Dorsolateral prefrontal cortex (tissue), 120 donors: ENCODE measurements at regions of chr2 and their contacts with region 1.

Region 1: GRCh38 chr2:156332534-156333273 is at the start of gene NR4A2:
- DNase-seq: peak; percentile 80 to 93 (median 90)
- H3K4me3 ChIP-seq: peak within 1 kb of the TSS; percentile 59 to 98 (median 88)
- H3K27ac ChIP-seq: peak within 1 kb of the TSS; percentile 89 to 100 (median 99)
- H3K27me3 ChIP-seq: peaks cover 0 to 7% (median 0%) of the 10 kb centered on the region in 45 donors
- CTCF ChIP-seq: peak in 14 of 56 donors; percentile 4 to 38 (median 14)
- total RNA-seq, gene NR4A2: 2.4 to 40.3 (median 11.4) TPM

Region 2: DNA sequence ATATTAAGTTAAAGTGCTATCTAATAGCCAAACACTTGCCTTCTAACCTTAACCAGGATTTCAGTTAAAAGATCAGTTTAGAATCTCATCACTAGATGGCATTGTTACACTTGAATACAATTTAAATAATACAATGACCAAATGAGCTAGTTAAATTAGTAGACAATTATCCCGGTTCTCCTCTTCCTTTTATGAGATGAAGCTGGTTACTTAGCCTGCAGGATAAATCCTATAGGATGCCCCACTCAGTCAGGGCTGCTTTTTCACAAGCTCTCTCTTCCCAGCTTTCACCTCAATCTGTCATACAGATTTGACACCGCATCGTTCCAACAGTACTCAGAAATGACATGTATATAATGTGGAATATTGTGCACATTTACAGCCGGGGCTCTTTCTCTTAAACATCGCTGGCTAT is 955.4 kb before region 1 on chr2:
- intact Hi-C with region 1: loop called (anchors 10 kb)
- DNase-seq: no peak
- H3K4me3 ChIP-seq: no peak overlapping the region
- H3K27ac ChIP-seq: no peak overlapping the region
- H3K27me3 ChIP-seq: no peaks in the 10 kb centered on the region
- CTCF ChIP-seq: peak; percentile 26 to 84 (median 63)

Region 3: GRCh38 chr2:155733091-155733853 is 599.4 kb before region 1 on chr2:
- intact Hi-C with region 1: loop called in 1 of 2 experiments (anchors 5 kb)
- DNase-seq: peak in 9 of 10 donors; percentile 24 to 71 (median 47)
- H3K4me3 ChIP-seq: peak overlapping the region in 36 of 59 donors; percentile 2 to 55 (median 28)
- H3K27ac ChIP-seq: peak overlapping the region in 58 of 59 donors; percentile 50 to 95 (median 88)
- H3K27me3 ChIP-seq: no peaks in the 10 kb centered on the region
- CTCF ChIP-seq: peak in 1 of 56 donors; percentile 22

Region 4: DNA sequence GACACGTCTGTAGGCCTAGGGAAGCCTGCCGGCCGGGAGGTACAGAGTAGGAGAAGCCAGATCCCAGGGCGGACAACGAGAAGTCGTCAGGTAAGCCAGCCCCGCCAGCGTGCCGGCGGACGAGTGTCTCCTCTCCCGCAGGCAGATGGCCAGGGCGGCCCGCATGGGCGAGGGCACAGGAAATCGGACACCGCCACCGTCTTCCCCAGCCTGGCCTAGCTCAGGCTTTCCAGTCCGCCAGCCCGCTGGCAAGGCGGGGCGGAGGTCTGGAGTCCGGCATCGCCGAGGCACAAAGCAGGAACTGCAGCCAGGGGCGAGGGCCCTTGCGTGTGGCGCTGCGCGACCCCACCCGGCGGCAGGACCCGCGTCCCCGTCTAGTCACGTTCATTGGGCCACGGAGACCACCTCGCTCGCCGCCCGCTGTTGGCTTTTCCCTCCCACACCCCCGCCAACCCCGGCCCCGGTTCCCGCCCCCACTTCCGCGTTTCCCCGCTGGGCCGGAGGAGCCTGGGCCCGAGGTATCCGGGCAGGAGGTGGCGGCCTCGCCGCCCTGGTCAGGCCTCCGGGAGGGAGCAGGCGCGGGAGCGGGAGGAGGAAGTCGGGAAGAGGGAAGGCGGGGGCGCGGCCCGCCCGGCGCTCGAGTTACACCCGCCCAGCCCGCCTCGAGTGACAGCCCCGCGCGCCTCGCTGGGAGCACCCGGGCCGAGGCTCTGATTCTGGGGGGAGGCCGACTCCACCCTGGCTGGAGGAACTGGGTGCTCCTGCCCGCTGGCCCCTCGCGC is 103.2 kb after region 1 on chr2 and contains the start of gene GPD2:
- intact Hi-C with region 1: loop called (anchors 2 kb)
- DNase-seq: peak; percentile 68 to 90 (median 84)
- H3K4me3 ChIP-seq: peak within 1 kb of the TSS; percentile 58 to 99 (median 84)
- H3K27ac ChIP-seq: peak within 1 kb of the TSS; percentile 87 to 99 (median 97)
- H3K27me3 ChIP-seq: no peaks in the 10 kb centered on the region
- CTCF ChIP-seq: peak in 33 of 56 donors; percentile 2 to 55 (median 27)
- total RNA-seq, gene GPD2: 31.2 to 87.8 (median 46.5) TPM

Region 5: DNA sequence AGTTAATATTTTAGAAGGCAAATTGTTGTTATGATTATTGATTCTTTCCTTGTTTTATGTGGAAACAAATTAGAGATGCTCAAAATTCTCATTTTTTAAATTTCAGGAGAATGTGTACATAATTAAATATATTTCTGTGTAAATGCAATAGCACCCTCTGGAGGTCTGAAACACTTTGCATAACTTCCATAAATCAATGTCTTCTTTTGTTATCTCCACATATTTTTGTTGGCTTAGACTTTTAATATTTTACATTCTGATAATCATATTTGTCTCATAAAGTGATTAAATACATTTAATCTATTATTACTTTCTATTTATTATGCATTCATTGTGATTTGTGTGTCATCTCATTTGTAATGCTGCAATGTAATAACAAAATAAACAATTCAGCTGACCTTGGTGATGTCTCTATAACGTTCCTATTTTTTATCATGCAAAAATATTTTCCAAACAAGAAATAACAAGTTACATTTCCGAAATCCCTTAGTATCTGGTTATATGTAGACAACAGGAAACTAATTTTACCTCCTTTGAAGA is 723.0 kb after region 1 on chr2:
- intact Hi-C with region 1: loop called in 1 of 2 experiments (anchors 10 kb)
- DNase-seq: no peak
- H3K4me3 ChIP-seq: peak overlapping the region in 32 of 59 donors; percentile 1 to 47 (median 20)
- H3K27ac ChIP-seq: peak overlapping the region in 51 of 59 donors; percentile 3 to 87 (median 66)
- H3K27me3 ChIP-seq: no peaks in the 10 kb centered on the region
- CTCF ChIP-seq: peak; percentile 54 to 90 (median 70)

Region 6: GRCh38 chr2:157173740-157174184 is 841.1 kb after region 1 on chr2:
- intact Hi-C with region 1: no loop called
- DNase-seq: peak in 1 of 10 donors; percentile 60
- H3K4me3 ChIP-seq: peak overlapping the region in 3 of 59 donors; percentile 1 to 17 (median 13)
- H3K27ac ChIP-seq: peak overlapping the region in 4 of 59 donors; percentile 4 to 66 (median 18)
- H3K27me3 ChIP-seq: no peaks in the 10 kb centered on the region
- CTCF ChIP-seq: no peak